ENCODE measurements at regions of chr1 and their contacts with region 1.

Region 1: GRCh38 chr1:166838766-166839599 is at the start of gene POGK:
- DNase-seq: peak; percentile 80 to 93
- ATAC-seq: peak; percentile 94 to 98
- H3K4me3 ChIP-seq: peak within 1 kb of the TSS; percentile 63
- H3K27ac ChIP-seq: peak within 1 kb of the TSS; percentile 80 to 97
- H3K4me1 ChIP-seq: peaks cover 15% of the 10 kb centered on the region
- CTCF ChIP-seq: no peak
- EP300 ChIP-seq: no peak
- POLR2A ChIP-seq: peak; percentile 87
- RAD21 ChIP-seq: no peak
- polyA plus RNA-seq, gene POGK: 32.2 and 37.2 TPM in 2 replicates

Region 2: GRCh38 chr1:165763442-165763841 is 1075.5 kb before region 1 on chr1:
- CTCF ChIA-PET with region 1: no interaction called
- POLR2A ChIA-PET with region 1: no interaction called
- DNase-seq: no peak
- ATAC-seq: no peak
- H3K4me3 ChIP-seq: no peak overlapping the region
- H3K27ac ChIP-seq: no peak overlapping the region
- H3K4me1 ChIP-seq: peaks cover 8% of the 10 kb centered on the region; the same call in 2 of the 3 replicates
- CTCF ChIP-seq: no peak
- EP300 ChIP-seq: no peak
- POLR2A ChIP-seq: no peak
- RAD21 ChIP-seq: no peak

Region 3: GRCh38 chr1:166695115-166695514 is 143.9 kb before region 1 on chr1:
- CTCF ChIA-PET with region 1: no interaction called
- POLR2A ChIA-PET with region 1: no interaction called
- DNase-seq: no peak
- ATAC-seq: no peak
- H3K4me3 ChIP-seq: no peak overlapping the region
- H3K27ac ChIP-seq: no peak overlapping the region
- H3K4me1 ChIP-seq: no peaks in the 10 kb centered on the region
- CTCF ChIP-seq: no peak
- EP300 ChIP-seq: no peak
- POLR2A ChIP-seq: no peak
- RAD21 ChIP-seq: no peak

Region 4: GRCh38 chr1:166852925-166853324 is 13.9 kb after region 1 on chr1:
- CTCF ChIA-PET with region 1: interaction called, 8 read pairs
- POLR2A ChIA-PET with region 1: interaction called, 10 read pairs
- DNase-seq: no peak
- ATAC-seq: no peak
- H3K4me3 ChIP-seq: no peak overlapping the region
- H3K27ac ChIP-seq: no peak overlapping the region
- H3K4me1 ChIP-seq: no peaks in the 10 kb centered on the region
- CTCF ChIP-seq: no peak
- EP300 ChIP-seq: no peak
- POLR2A ChIP-seq: no peak
- RAD21 ChIP-seq: no peak

Region 5: GRCh38 chr1:166875734-166876539 is 37.0 kb after region 1 on chr1 and contains the start of gene TADA1:
- CTCF ChIA-PET with region 1: no interaction called
- POLR2A ChIA-PET with region 1: interaction called, 30 read pairs
- DNase-seq: peak; percentile 82 to 99
- ATAC-seq: peak; percentile 95 to 96
- H3K4me3 ChIP-seq: peak within 1 kb of the TSS; percentile 75
- H3K27ac ChIP-seq: peak within 1 kb of the TSS; percentile 93 to 97
- H3K4me1 ChIP-seq: peaks cover 11% of the 10 kb centered on the region; the same call in 2 of the 3 replicates
- CTCF ChIP-seq: no peak
- EP300 ChIP-seq: no peak
- POLR2A ChIP-seq: peak; percentile 60
- RAD21 ChIP-seq: no peak
- polyA plus RNA-seq, gene TADA1: 22.4 and 25.6 TPM in 2 replicates

Measured in A549 (cell line).